ENCODE measurements at regions of chr3 and their contacts with region 1.

Region 1: DNA sequence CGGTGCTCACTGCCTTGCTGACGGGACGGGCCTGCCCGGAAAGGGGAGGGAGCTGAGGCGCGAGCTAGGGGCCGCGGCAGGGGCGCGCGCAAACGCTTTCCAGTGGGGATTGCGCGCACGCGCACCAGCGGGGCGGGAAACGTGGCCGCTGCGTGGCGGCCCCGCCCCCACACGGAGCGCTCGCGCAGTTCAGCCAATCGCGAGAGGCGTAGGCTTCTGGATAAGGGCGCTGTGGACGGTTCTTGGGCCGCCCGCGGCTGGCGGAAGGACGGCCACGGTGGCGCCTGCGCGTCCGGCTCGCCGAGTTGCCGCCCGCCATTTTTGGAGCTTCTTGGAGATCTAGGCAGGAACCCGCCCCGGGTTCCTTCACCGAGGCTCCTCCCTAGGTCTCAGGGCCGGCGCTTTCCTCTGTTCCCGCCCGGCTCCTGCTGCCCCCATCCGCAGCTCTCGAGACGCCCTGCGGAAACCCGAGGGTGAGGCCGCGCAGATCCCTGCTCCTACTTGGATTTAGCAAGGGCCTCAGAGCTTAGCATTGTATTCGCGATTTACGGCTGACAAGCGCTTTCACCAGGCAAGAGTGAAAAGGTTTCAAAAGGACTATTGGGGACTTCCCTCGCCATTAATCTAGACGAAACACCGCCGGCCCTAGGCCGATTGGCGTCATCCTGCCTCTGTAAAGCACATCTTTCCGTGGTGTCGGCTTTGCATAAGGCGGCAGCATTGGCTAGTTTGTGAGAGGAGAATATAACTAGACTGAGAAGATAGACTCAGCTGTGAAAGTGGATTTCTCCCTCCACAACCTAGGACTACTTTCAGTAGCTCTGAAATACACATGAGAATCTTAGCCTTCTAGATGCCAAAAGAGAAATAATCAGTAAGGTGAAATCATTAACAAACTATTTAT is 496 bp upstream of the STAG1 start:
- DNase-seq: peak; percentile 93
- ATAC-seq: peak; percentile 94
- H3K4me3 ChIP-seq: peak overlapping the region; percentile 61 to 86 (median 81)
- H3K27ac ChIP-seq: peak overlapping the region; percentile 97
- H3K4me1 ChIP-seq: peaks cover 31% of the 10 kb centered on the region
- H3K27me3 ChIP-seq: no peaks in the 10 kb centered on the region
- CTCF ChIP-seq: 0 out of 2 replicates have a peak, but pooled peaks have one; percentile 44
- EP300 ChIP-seq: 0 out of 4 replicates have a peak, but pooled peaks of 1 of the 2 experiments have one; percentile 7
- POLR2A ChIP-seq: peak; percentile 73 to 95; a peak in 3 of 4 replicates
- RAD21 ChIP-seq: no peak; the same call in 1 of the 2 replicates

Region 2: DNA sequence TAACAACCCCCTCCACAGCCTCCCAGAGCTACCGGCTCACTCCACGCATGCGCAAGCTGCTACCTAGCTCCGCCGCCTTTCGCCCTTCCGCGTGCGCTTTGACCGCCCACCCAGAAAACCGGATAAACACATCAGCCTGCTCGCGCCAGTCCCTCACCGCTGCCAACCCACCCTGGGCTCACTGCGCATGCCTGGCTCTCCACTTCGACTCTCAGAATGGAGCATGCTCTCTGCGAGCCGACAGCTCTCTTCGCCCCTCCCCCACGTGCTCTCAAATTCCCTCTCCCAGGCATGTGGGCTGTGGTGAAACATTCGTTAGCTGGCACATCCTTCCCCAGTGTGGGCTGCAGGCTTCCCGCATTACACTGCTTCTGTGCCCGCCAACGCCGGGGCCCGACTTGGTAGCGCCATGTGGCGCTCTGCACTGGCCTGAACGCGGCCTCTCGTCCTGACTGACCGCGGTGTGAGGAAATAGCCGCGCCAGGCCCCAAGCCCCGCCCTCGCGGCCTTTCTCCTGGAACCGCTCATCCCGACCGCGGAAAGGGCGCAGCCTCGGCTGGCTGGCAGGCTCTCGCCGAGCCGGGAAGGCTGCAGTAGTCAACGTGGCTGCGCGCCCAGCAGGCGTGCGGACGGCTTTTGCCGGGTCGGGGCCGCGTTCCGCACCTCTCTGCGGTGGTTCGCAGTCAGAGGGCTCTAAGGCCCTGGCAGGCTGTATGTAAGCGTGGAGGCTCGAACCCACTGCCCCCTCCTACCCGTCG is 556.1 kb before region 1 on chr3:
- CTCF ChIA-PET with region 1: no interaction called
- POLR2A ChIA-PET with region 1: interaction called, 22 read pairs
- in situ Hi-C with region 1: no loop called
- intact Hi-C with region 1: loop called (anchors 10 kb)
- DNase-seq: peak; percentile 98
- ATAC-seq: peak; percentile 84
- H3K4me3 ChIP-seq: peak overlapping the region; percentile 45 to 93 (median 80); a peak in 5 of 6 replicates
- H3K27ac ChIP-seq: peak overlapping the region; percentile 92
- H3K4me1 ChIP-seq: peaks cover 22% of the 10 kb centered on the region
- H3K27me3 ChIP-seq: no peaks in the 10 kb centered on the region
- CTCF ChIP-seq: no peak; the same call in none of the 2 replicates
- EP300 ChIP-seq: no peak
- POLR2A ChIP-seq: peak in 1 of 2 experiments; percentile 91; a peak in 2 of 4 replicates
- RAD21 ChIP-seq: 0 out of 2 replicates have a peak, but pooled peaks have one; percentile 79

Region 3: GRCh38 chr3:136332776-136333175 is 419.9 kb before region 1 on chr3:
- CTCF ChIA-PET with region 1: no interaction called
- POLR2A ChIA-PET with region 1: no interaction called
- in situ Hi-C with region 1: no loop called
- intact Hi-C with region 1: no loop called
- DNase-seq: peak; percentile 24
- ATAC-seq: peak; percentile 46; the same call in 2 of the 3 replicates
- H3K4me3 ChIP-seq: no peak overlapping the region
- H3K27ac ChIP-seq: no peak overlapping the region
- H3K4me1 ChIP-seq: 0 out of 2 replicates have a peak, but pooled peaks cover 4% of the 10 kb centered on the region
- H3K27me3 ChIP-seq: no peaks in the 10 kb centered on the region
- CTCF ChIP-seq: no peak
- EP300 ChIP-seq: no peak
- POLR2A ChIP-seq: no peak
- RAD21 ChIP-seq: no peak

Region 4: GRCh38 chr3:136390574-136390973 is 362.1 kb before region 1 on chr3:
- CTCF ChIA-PET with region 1: interaction called, 11 read pairs
- POLR2A ChIA-PET with region 1: interaction called, 15 read pairs
- in situ Hi-C with region 1: loop called (anchors 10 kb)
- intact Hi-C with region 1: loop called (anchors 1 kb)
- DNase-seq: no peak
- ATAC-seq: no peak
- H3K4me3 ChIP-seq: no peak overlapping the region
- H3K27ac ChIP-seq: no peak overlapping the region
- H3K4me1 ChIP-seq: no peaks in the 10 kb centered on the region
- H3K27me3 ChIP-seq: no peaks in the 10 kb centered on the region
- CTCF ChIP-seq: no peak
- EP300 ChIP-seq: no peak
- POLR2A ChIP-seq: no peak
- RAD21 ChIP-seq: no peak

Region 5: GRCh38 chr3:136545664-136546268 is 206.9 kb before region 1 on chr3:
- CTCF ChIA-PET with region 1: interaction called, 6 read pairs
- POLR2A ChIA-PET with region 1: interaction called, 4 read pairs
- in situ Hi-C with region 1: loop called (anchors 25 kb)
- intact Hi-C with region 1: loop called (anchors 1 kb)
- DNase-seq: no peak
- ATAC-seq: no peak
- H3K4me3 ChIP-seq: no peak overlapping the region
- H3K27ac ChIP-seq: no peak overlapping the region
- H3K4me1 ChIP-seq: no peaks in the 10 kb centered on the region
- H3K27me3 ChIP-seq: no peaks in the 10 kb centered on the region
- CTCF ChIP-seq: peak; percentile 44
- EP300 ChIP-seq: no peak
- POLR2A ChIP-seq: no peak
- RAD21 ChIP-seq: no peak

Region 6: GRCh38 chr3:136632625-136633081 is 120.0 kb before region 1 on chr3:
- CTCF ChIA-PET with region 1: no interaction called
- POLR2A ChIA-PET with region 1: interaction called, 8 read pairs
- in situ Hi-C with region 1: no loop called
- intact Hi-C with region 1: loop called (anchors 5 kb)
- DNase-seq: peak; percentile 80
- ATAC-seq: peak; percentile 82
- H3K4me3 ChIP-seq: no peak overlapping the region; a peak in 1 of 6 replicates
- H3K27ac ChIP-seq: peak overlapping the region; percentile 64
- H3K4me1 ChIP-seq: peaks cover 26% of the 10 kb centered on the region
- H3K27me3 ChIP-seq: no peaks in the 10 kb centered on the region
- CTCF ChIP-seq: no peak
- EP300 ChIP-seq: no peak
- POLR2A ChIP-seq: no peak
- RAD21 ChIP-seq: no peak

Region 7: GRCh38 chr3:137013955-137014688 is 261.4 kb after region 1 on chr3:
- CTCF ChIA-PET with region 1: interaction called, 45 read pairs
- POLR2A ChIA-PET with region 1: interaction called, 41 read pairs
- in situ Hi-C with region 1: loop called (anchors 5 kb)
- intact Hi-C with region 1: loop called (anchors 1 kb)
- DNase-seq: peak; percentile 82
- ATAC-seq: peak; percentile 94
- H3K4me3 ChIP-seq: peak overlapping the region; percentile 54 to 86 (median 73)
- H3K27ac ChIP-seq: peak overlapping the region; percentile 63
- H3K4me1 ChIP-seq: peaks cover 16% of the 10 kb centered on the region
- H3K27me3 ChIP-seq: no peaks in the 10 kb centered on the region; a peak in 1 of 5 replicates
- CTCF ChIP-seq: peak; percentile 94
- EP300 ChIP-seq: no peak
- POLR2A ChIP-seq: no peak; a peak in 1 of 4 replicates
- RAD21 ChIP-seq: peak; percentile 94